AG04450 (cell line): ENCODE measurements at regions of chr11 and their contacts with region 1.

Region 1: GRCh38 chr11:95067039-95067840 is 521 bp downstream of the SRSF8 start:
- DNase-seq: no peak
- H3K4me3 ChIP-seq: peak overlapping the region; percentile 77
- H3K27ac ChIP-seq: peak overlapping the region; percentile 83
- H3K27me3 ChIP-seq: no peaks in the 10 kb centered on the region
- CTCF ChIP-seq: peak; percentile 64

Region 2: DNA sequence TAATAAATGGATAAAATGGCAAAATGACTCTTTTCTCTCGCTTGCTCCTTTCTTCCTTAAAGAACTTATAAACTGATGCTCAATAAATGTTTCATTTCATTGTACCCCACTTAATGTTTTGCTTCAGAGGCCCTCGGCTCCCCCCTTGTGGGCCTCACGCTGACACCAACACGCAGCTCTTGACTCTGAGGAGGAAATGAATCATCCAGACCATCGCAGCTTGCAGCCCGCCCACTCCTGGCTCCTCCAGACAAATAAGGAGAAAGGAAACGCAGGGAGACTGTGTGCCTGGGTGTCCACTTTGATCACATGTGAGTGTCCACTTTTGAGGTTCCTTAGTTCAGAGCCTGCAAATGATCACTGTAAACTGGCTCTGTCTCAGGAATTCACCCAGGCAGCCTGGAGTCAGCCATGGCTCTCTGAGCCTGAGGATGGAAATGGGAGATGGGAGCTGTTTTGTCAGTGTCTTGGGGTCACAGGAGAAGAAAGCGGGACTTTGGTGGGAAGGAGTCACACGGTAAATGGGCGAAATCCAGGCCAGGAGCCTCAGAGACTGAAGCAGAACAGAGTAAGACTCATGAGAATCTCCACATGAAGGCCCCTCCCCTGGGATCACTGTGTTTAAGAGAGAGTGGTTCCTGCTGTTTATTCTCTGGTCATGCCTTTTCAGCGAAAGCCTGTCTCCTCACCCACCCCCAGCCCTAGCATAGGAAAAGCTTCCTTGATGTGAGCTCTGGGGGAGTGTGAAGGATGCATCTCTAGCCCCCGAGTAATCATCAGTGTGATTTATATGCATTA is 190.4 kb before region 1 on chr11:
- CTCF ChIA-PET with region 1: no interaction called
- POLR2A ChIA-PET with region 1: no interaction called
- DNase-seq: peak; percentile 85
- H3K4me3 ChIP-seq: no peak overlapping the region
- H3K27ac ChIP-seq: peak overlapping the region; percentile 99
- H3K27me3 ChIP-seq: no peaks in the 10 kb centered on the region
- CTCF ChIP-seq: peak; percentile 40; the same call in 1 of the 2 replicates

Region 3: GRCh38 chr11:95084509-95084908 is 17.3 kb after region 1 on chr11:
- CTCF ChIA-PET with region 1: interaction called, 12 read pairs
- POLR2A ChIA-PET with region 1: interaction called, 12 read pairs
- DNase-seq: no peak
- H3K4me3 ChIP-seq: no peak overlapping the region
- H3K27ac ChIP-seq: no peak overlapping the region
- H3K27me3 ChIP-seq: no peaks in the 10 kb centered on the region
- CTCF ChIP-seq: no peak

Region 4: GRCh38 chr11:95089620-95090542 is 22.6 kb after region 1 on chr11 and contains the start of gene ENDOD1:
- CTCF ChIA-PET with region 1: interaction called, 12 read pairs
- POLR2A ChIA-PET with region 1: interaction called, 12 read pairs
- DNase-seq: no peak
- H3K4me3 ChIP-seq: peak within 1 kb of the TSS; percentile 69
- H3K27ac ChIP-seq: peak within 1 kb of the TSS; percentile 48
- H3K27me3 ChIP-seq: no peaks in the 10 kb centered on the region
- CTCF ChIP-seq: 0 out of 2 replicates have a peak, but pooled peaks have one; percentile 9
- polyA plus RNA-seq, gene ENDOD1: 10.0 and 12.1 TPM in 2 replicates

Region 5: GRCh38 chr11:95135880-95136279 is 68.6 kb after region 1 on chr11:
- CTCF ChIA-PET with region 1: interaction called, 13 read pairs
- POLR2A ChIA-PET with region 1: no interaction called
- DNase-seq: no peak
- H3K4me3 ChIP-seq: no peak overlapping the region
- H3K27ac ChIP-seq: no peak overlapping the region
- H3K27me3 ChIP-seq: peaks cover 5% of the 10 kb centered on the region
- CTCF ChIP-seq: no peak

Region 6: GRCh38 chr11:95150946-95151684 is 83.9 kb after region 1 on chr11:
- CTCF ChIA-PET with region 1: interaction called, 85 read pairs
- POLR2A ChIA-PET with region 1: interaction called, 12 read pairs
- DNase-seq: peak; percentile 66
- H3K4me3 ChIP-seq: peak overlapping the region; percentile 51
- H3K27ac ChIP-seq: no peak overlapping the region
- H3K27me3 ChIP-seq: no peaks in the 10 kb centered on the region
- CTCF ChIP-seq: peak; percentile 78

Region 7: DNA sequence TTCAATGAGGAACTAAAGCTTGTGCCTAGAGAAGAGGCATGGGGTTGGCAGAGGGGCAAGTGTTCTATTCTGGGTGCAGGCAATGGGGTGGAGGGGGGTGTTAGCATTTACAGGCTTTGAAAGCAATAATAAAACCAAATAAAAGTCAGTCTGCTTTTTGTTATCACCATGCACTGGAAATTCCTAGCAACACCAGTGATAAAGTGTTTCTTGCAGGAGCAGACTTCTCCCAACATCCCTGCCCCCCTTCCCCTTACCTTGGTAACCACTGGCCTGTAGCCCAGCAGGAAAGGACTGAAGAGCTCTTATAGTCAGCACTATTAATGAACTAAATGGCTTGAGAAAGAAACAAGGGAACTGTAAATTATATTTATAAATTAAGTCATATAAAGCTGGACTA is 228.9 kb after region 1 on chr11:
- CTCF ChIA-PET with region 1: no interaction called
- POLR2A ChIA-PET with region 1: no interaction called
- DNase-seq: no peak
- H3K4me3 ChIP-seq: no peak overlapping the region
- H3K27ac ChIP-seq: no peak overlapping the region
- H3K27me3 ChIP-seq: no peaks in the 10 kb centered on the region
- CTCF ChIP-seq: no peak

Region 8: DNA sequence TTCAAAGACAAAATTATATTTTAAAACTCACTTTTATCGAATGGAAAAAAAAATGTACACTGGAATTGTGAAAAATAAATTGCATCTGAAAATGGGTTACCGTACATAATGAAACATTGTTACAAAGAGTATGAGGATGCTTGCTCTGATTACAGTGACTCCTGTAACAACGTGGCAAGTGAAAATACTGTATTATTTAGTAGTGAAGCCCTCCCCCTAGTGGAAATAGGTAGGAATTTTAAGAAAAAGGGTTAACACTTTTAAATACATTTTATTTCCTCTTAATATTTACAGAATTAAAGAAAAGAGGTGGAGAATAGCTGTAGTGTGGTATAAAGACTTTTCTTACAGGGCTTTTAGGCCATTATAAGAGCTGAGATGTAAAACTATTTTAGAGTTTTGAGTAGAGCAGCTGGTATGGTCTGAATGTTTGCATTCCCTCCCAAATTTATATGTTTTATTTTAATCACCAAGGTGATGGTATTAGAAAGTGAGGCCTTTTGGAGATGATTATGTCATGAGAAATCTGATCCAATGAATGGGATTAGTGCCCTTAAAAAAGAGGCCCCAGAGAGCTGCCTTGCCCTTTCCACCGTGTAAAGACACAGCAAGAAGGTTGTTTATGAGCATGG is 697.1 kb after region 1 on chr11:
- CTCF ChIA-PET with region 1: interaction called, 49 read pairs
- POLR2A ChIA-PET with region 1: no interaction called
- DNase-seq: peak; percentile 38
- H3K4me3 ChIP-seq: no peak overlapping the region
- H3K27ac ChIP-seq: no peak overlapping the region
- H3K27me3 ChIP-seq: no peaks in the 10 kb centered on the region
- CTCF ChIP-seq: peak; percentile 63